Lower leg skin (tissue), 4 donors: ENCODE measurements at regions of chr12 and their contacts with region 1.

Region 1: DNA sequence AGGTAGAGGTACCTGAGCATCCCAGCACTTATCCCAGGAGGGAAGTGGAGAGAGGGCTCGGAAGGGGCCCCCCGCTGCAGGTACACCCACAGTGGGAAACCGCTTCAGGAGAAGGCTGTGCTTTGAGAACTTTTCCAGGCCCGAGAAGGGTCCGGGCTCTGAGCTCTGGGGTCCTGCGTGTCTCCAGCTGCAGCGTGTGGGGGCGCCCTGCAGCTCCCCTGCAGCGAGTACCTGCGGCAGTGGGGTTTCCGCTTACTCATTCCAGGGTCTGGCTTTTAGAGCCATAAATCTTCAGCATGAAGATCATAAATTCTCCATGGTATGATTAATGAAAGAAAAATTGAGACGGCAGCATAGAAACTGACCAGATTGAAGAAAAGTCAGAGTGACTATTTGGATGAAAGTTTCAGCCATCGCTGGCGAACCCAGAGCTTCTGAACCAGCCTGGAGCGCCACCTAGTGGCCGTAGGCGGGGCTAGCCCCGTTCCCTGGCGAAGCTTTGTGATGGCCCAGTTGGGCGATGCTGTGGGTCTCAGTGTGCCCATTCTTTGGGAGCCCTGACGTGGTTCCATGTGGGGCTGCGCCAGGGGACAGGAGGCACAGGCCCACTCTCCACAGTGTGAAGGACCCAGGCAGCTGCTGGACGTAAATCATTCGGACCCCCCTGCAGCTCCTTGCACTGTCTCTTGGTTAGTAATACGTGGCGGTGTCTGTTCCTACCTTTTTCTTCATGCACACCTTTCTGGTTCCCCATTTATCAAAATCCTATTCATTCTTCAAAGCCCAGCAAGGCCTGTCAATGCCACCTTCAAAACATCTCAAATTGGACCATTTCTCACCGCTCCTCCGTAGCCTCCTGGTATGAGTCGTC is 198.2 kb downstream of the TSPAN9 start:
- DNase-seq: peak; percentile 56 to 95
- H3K4me3 ChIP-seq: no peak overlapping the region
- CTCF ChIP-seq: peak in 1 of 3 donors; percentile 84
- POLR2A ChIP-seq: no peak

Region 2: DNA sequence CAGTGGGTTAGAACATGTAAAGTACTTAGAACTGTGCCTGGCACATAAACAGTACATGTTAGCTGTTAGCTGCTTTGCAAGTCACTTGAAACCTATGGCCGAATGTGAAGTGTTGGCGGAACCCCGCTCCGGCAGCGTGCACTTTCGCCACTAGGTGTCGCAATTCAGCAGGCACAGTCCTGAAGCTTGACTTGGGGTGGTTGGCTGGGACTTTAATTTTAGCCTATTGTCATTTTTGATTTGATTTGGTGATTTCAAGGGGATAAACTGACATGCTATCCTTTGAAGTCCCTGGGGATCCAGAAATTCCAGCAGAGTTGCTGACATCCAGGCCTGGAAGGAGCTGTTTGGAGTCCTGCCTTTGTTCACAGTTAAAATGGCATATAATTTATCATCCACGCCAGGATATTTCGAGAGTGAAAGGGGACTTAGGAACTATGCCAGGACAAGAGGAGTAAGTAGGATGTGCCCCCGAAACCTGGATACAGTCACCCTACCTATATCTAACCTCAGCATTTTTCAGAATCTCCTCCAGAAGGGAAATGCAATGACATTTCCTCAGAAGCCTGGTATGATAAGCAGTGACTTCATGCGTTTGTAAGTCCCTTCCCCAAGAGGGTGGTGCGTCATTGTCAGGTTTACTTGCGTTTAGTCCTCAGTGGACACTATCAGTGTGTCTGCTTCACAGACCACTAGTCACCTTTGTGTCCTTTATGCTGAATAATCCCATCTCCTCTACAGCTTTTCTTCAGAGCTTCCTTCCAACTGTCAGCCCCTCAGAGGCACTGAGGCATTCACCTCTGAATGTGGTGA is 201.8 kb before region 1 on chr12:
- intact Hi-C with region 1: loop called (anchors 1 kb)
- DNase-seq: peak; percentile 83 to 98
- H3K4me3 ChIP-seq: no peak overlapping the region
- CTCF ChIP-seq: peak in 1 of 3 donors; percentile 82
- POLR2A ChIP-seq: no peak

Region 3: GRCh38 chr12:3135522-3136461 is 139.6 kb before region 1 on chr12:
- intact Hi-C with region 1: loop called (anchors 5 kb)
- DNase-seq: peak; percentile 37 to 85
- H3K4me3 ChIP-seq: no peak overlapping the region
- CTCF ChIP-seq: peak in 1 of 3 donors; percentile 49
- POLR2A ChIP-seq: no peak